Caco-2 (cell line): ENCODE measurements at regions of chr1 and their contacts with region 1.

Region 1: GRCh38 chr1:227787513-227788270 is 27.8 kb upstream of the PRSS38 start:
- DNase-seq: peak; percentile 93 to 96
- H3K4me3 ChIP-seq: peak overlapping the region; percentile 70
- H3K4me3 Mint-ChIP-seq: peak overlapping the region; percentile 83
- H3K27ac Mint-ChIP-seq: peak overlapping the region; percentile 16
- H3K4me1 ChIP-seq: peaks cover 17% of the 10 kb centered on the region; the same call in 1 of the 2 replicates
- H3K4me1 Mint-ChIP-seq: peaks cover 6% of the 10 kb centered on the region
- H3K27me3 ChIP-seq: no peaks in the 10 kb centered on the region
- H3K27me3 Mint-ChIP-seq: peaks cover 6% of the 10 kb centered on the region
- CTCF ChIP-seq: no peak

Region 2: DNA sequence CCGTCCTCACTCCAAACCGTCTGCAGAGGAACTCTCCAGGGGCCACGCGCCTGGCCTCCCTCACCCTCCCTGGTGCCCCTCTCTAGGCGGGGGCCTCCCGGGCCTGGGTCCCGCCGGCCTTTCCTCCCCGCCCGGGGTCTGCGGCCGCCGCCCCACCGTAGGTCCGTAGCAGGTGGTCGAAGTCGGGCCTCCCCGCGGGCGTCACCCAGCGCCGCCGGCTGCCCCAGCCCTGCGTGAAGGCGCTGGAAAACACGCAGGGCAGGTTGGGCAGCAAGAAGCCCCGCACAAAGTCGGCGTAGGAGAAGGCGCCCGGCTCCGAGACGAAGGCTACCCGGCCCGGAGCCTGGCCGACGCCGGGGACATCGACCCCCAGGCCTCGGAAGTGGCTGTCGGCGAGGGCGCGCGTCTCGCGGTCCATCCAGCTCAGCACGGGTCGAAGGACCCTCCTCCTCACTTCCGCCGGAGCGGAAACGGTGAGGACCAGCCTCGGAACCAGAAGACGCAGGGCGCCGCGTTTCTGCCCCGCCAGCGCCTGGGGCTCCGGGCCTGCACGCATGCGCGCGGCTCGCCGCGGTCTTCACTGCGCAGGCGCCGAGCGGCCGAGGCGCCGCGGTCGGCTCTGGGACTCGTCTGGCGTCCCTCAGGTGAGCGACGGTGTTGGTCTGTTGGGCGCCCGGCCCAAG is 52.7 kb before region 1 on chr1 and contains the starts of genes JMJD4 and SNAP47:
- CTCF ChIA-PET with region 1: no interaction called
- POLR2A ChIA-PET with region 1: interaction called, 9 read pairs
- intact Hi-C with region 1: loop called (anchors 2 kb)
- DNase-seq: peak; percentile 92 to 94
- H3K4me3 ChIP-seq: peak within 1 kb of the TSS; percentile 97
- H3K4me3 Mint-ChIP-seq: peak within 1 kb of the TSS; percentile 87
- H3K27ac Mint-ChIP-seq: peak within 1 kb of the TSS; percentile 57
- H3K4me1 ChIP-seq: no peaks in the 10 kb centered on the region
- H3K4me1 Mint-ChIP-seq: no peaks in the 10 kb centered on the region
- H3K27me3 ChIP-seq: no peaks in the 10 kb centered on the region
- H3K27me3 Mint-ChIP-seq: no peaks in the 10 kb centered on the region
- CTCF ChIP-seq: no peak
- total RNA-seq, gene JMJD4: 25.3 and 27.1 TPM in 2 replicates
- total RNA-seq, gene SNAP47: 29.1 and 30.3 TPM in 2 replicates

Region 3: GRCh38 chr1:227891955-227892881 is 104.5 kb after region 1 on chr1:
- CTCF ChIA-PET with region 1: no interaction called
- POLR2A ChIA-PET with region 1: no interaction called
- intact Hi-C with region 1: loop called (anchors 5 kb)
- DNase-seq: peak; percentile 32 to 71
- H3K4me3 ChIP-seq: no peak overlapping the region
- H3K4me3 Mint-ChIP-seq: no peak overlapping the region
- H3K27ac Mint-ChIP-seq: peak overlapping the region; percentile 3
- H3K4me1 ChIP-seq: peaks cover 45% of the 10 kb centered on the region
- H3K4me1 Mint-ChIP-seq: peaks cover 4% of the 10 kb centered on the region
- H3K27me3 ChIP-seq: no peaks in the 10 kb centered on the region
- H3K27me3 Mint-ChIP-seq: no peaks in the 10 kb centered on the region
- CTCF ChIP-seq: no peak

Region 4: GRCh38 chr1:227946624-227947385 is 159.1 kb after region 1 on chr1:
- CTCF ChIA-PET with region 1: interaction called, 3 read pairs
- POLR2A ChIA-PET with region 1: no interaction called
- intact Hi-C with region 1: loop called (anchors 1 kb)
- DNase-seq: peak; percentile 75 to 91
- H3K4me3 ChIP-seq: peak overlapping the region; percentile 58
- H3K4me3 Mint-ChIP-seq: peak overlapping the region; percentile 71
- H3K27ac Mint-ChIP-seq: peak overlapping the region; percentile 39
- H3K4me1 ChIP-seq: peaks cover 9% of the 10 kb centered on the region
- H3K4me1 Mint-ChIP-seq: no peaks in the 10 kb centered on the region
- H3K27me3 ChIP-seq: no peaks in the 10 kb centered on the region
- H3K27me3 Mint-ChIP-seq: no peaks in the 10 kb centered on the region
- CTCF ChIP-seq: peak; percentile 79 to 81

Region 5: GRCh38 chr1:228059634-228060457 is 272.2 kb after region 1 on chr1:
- CTCF ChIA-PET with region 1: interaction called, 10 read pairs
- POLR2A ChIA-PET with region 1: interaction called, 7 read pairs
- intact Hi-C with region 1: no loop called
- DNase-seq: peak; percentile 96 to 99
- H3K4me3 ChIP-seq: peak overlapping the region; percentile 60
- H3K4me3 Mint-ChIP-seq: peak overlapping the region; percentile 73
- H3K27ac Mint-ChIP-seq: no peak overlapping the region
- H3K4me1 ChIP-seq: no peaks in the 10 kb centered on the region
- H3K4me1 Mint-ChIP-seq: no peaks in the 10 kb centered on the region
- H3K27me3 ChIP-seq: no peaks in the 10 kb centered on the region; the same call in 1 of the 2 replicates
- H3K27me3 Mint-ChIP-seq: peaks cover 20% of the 10 kb centered on the region
- CTCF ChIP-seq: no peak